AG04449 (cell line): ENCODE measurements at regions of chr2 and their contacts with region 1.

Region 1: GRCh38 chr2:219689676-219690628 is 62.5 kb downstream of the SLC4A3 start:
- DNase-seq: no peak
- H3K4me3 ChIP-seq: no peak overlapping the region
- CTCF ChIP-seq: peak; percentile 63

Region 2: GRCh38 chr2:219362524-219363164 is 327.3 kb before region 1 on chr2:
- CTCF ChIA-PET with region 1: no interaction called
- POLR2A ChIA-PET with region 1: no interaction called
- DNase-seq: peak; percentile 91
- H3K4me3 ChIP-seq: no peak overlapping the region
- CTCF ChIP-seq: no peak

Region 3: DNA sequence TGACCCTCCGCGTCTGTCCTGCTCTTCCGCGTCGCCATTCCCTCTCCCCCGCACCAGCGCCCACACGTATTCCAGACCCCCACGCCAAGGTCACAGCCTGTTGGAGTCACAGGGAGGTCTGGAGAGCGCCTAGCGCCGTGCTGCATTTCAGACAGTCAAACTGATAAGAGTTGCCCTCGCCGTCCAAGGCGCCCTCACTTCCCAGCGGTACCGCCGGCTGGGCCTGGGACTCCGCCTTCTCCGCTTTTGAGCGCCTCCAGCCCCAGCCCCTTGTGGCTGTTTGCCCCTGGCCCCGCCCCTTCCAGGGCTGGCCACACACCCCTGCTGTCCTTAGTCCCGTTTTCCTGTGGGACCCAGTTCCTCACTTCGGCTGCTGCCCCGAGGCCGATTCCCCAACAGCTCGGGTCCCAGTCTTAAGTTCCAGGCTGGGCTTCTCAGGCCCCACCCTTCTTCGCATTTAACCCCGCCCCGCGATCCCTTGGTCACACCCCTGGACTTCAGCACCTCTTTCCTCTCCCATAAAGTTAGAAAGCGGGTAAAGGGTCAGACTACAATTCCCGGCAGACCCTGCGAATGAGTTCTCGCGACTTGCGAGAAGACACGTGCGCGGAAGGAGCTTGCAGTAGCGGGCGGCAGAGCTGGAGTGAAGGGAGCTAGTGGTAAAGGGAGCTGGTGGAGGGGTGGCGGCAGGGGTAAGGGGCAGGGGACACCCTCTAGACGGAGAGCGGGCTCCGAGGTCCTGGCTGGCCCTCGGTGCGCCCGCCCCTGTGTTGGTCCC is 191.5 kb before region 1 on chr2 and contains the start of gene GMPPA:
- CTCF ChIA-PET with region 1: interaction called, 25 read pairs
- POLR2A ChIA-PET with region 1: no interaction called
- DNase-seq: peak; percentile 95
- H3K4me3 ChIP-seq: peak within 1 kb of the TSS; percentile 75
- CTCF ChIP-seq: peak; percentile 9

Region 4: DNA sequence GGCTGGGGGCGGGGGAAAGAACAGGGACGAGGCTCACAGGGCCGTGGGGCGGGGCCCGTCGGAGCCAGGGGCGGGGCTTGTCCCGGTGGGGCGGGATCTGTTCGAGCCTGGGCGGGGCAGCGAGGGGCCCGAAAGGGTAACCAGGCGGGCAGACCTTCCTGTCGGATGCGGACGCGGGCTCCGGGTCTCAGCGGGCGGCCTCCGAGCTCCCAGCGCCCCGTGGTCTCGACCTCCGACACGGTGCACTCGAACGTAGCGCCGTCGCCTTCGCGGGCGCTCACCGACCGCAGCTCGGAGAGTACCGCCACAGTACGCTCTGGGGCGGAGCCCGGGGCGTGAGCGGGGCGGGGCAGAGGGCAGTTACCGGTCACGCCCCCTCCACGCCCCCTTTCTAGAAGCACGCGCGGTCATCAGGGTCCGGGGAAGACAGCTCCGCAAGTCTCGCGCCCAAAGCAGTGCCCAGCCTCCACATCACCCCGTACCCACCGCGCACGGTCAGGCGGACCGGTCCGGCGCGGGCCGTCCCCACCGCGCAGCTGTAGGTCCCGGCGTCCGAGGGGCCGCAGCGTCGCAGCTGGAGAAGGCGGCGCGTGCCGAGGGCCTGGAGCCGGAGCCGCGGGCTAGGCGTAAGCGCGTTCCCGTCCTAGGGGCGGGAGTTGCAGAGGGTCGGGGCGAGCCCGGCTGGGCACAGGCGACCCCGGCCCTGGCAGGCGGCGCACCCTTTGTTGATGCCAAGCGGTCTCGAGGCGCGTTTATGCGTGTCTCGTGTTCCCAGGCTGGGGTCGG is 137.4 kb before region 1 on chr2:
- CTCF ChIA-PET with region 1: interaction called, 11 read pairs
- POLR2A ChIA-PET with region 1: interaction called, 3 read pairs
- DNase-seq: no peak
- H3K4me3 ChIP-seq: peak overlapping the region; percentile 73
- CTCF ChIP-seq: no peak

Region 5: DNA sequence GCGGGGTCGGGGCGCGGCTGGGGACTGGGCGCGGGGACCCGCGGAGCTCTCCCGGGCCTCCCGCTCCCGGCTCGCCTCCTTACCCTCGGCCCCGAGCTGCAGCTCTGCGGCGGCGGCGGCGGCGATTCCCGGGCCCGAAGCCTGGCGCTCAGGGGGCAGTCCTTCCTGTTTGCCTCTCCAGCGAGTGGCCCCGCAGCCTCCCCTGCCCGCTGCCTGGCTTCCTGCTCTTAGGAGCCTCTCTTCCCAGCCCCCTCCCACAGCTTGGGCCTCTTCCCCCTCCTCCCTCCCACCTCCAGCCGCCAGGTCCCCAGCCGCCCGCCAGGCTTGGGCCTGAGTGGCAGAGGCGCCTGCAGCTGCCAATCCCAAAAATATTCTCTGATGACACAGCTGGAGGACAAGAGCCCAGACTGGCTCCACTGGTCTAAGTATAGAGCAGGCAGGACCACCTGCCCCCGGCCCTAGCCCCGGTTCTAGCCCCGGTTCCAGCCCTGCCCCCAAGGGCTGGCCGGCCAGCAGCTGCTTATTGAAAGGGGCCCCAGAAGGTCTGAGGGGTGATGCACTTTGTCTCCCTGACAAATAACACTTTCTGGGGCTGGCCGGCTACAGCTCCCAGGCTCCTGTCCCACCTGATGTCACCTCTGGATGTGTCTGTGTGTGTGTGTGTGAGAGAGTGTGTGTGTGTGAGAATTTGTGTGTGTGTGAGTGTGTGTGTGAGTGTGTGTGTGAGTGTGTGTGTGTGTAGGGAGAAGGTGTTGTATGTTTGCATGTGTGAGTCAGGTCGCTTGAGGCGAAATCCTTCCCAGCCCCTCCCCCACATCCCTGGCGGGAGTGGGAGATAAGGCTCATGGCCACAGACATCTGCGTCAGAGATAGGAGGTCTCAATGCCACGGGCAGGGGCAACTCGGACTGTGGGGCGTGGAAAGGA is 118.4 kb before region 1 on chr2 and contains the start of gene OBSL1:
- CTCF ChIA-PET with region 1: interaction called, 14 read pairs
- POLR2A ChIA-PET with region 1: interaction called, 11 read pairs
- DNase-seq: peak; percentile 24
- H3K4me3 ChIP-seq: peak within 1 kb of the TSS; percentile 72
- CTCF ChIP-seq: no peak

Region 6: DNA sequence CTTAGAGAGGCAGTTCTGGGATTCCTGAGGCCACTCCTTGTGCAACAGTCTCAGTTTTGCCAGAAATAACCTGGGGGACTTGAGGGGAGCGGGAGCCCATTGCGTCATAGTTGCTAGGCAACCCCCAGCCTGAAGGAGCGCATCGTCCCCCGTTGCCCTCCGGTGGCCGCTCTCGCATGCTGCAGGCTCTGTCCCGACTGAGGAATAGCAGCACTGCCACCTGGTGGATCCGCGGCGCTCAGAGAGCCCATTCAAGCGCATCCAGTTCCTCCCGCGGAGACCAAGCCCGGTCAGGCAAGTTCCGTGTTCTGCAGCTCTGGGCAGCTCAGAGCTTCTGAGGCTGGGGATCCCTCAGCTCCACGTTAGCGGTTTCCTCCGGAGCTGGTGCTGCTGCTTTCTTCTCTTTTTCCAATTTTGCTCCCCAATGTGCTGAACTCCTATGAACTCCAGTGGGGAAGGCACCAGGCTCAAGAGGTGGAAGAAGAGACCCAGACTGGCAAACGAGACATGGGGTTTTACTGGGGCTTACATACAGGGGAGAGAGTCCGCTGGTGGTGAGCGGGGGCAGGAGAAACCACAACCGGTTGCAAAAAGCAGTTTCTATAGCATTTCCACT is 47.4 kb before region 1 on chr2:
- CTCF ChIA-PET with region 1: interaction called, 126 read pairs
- POLR2A ChIA-PET with region 1: interaction called, 11 read pairs
- DNase-seq: peak; percentile 82
- H3K4me3 ChIP-seq: no peak overlapping the region
- CTCF ChIP-seq: peak; percentile 100

Region 7: GRCh38 chr2:219701847-219702634 is 12.1 kb after region 1 on chr2:
- CTCF ChIA-PET with region 1: interaction called, 70 read pairs
- POLR2A ChIA-PET with region 1: interaction called, 3 read pairs
- DNase-seq: no peak
- H3K4me3 ChIP-seq: no peak overlapping the region
- CTCF ChIP-seq: no peak